ENCODE measurements at regions of chr16 and their contacts with region 1.

Region 1: DNA sequence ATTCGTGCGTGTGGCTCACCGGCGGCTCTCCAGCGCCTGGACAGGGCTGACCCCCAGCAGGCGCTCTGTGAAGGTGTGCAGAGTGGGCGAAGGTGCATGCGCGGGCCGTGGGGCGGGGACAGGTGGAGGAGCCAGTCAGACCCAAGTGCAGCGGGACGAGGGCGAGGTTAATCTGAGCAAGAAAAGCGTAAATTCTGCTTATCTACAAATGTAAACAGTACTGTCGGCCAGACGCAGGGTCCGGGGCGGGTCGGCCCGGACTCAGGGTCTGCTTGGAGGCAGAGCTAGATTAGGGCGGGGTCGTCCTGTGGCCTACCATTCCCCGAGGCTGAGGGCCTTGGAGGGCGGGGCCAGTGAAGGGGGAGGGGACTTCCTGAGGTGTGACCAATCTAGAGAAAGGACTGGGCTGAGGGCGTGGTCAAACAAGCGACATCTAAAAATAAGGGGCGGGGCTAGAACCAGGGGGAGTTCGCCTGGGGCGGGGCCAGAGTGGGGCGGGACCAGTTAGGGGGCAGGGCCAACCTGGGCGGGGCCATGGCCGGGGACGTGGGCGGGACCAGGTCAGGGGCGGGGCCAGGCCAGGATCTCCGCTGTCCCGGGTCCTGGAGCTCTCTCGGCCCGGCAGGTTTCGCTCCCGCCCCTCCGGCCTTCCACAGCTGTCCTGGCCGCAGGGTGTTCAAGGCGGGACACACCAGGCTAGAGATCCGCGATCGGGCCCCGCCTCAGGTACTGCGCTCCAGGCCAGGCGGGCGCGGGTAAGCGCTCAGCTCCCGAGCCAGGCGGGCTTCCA is at the start of gene SEC14L5:
- DNase-seq: peak; percentile 99
- H3K4me3 ChIP-seq: peak within 1 kb of the TSS; percentile 28 to 44
- H3K27ac ChIP-seq: peak within 1 kb of the TSS; percentile 71 to 74
- H3K4me1 ChIP-seq: peaks cover 2% of the 10 kb centered on the region
- H3K27me3 ChIP-seq: no peaks in the 10 kb centered on the region
- CTCF ChIP-seq: peak in 1 of 4 experiments; percentile 21
- POLR2A ChIP-seq: peak; percentile 58
- total RNA-seq, gene SEC14L5: 0.74 to 0.77 TPM

Region 2: DNA sequence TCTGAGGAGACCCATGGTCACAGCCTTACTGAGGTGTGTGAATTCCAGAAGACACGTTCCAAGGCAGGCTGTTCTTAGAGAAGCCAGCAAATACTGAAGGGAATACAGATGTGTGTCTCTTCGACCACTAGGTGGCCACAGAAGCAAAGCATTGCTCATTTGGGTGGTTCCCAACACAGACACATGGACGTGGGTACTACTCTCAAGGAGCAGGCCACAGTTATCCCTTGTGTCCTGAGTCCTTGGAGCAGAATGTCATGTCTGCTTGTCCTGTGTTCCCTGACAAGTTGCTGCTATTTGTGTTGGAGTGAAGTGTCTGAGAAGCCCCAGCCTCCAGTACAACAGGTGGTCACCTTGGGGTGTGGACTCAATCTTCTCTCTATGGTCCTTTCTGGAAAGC is 451.5 kb before region 1 on chr16:
- intact Hi-C with region 1: loop called (anchors 10 kb)
- DNase-seq: peak; percentile 71
- H3K4me3 ChIP-seq: no peak overlapping the region
- H3K27ac ChIP-seq: no peak overlapping the region
- H3K4me1 ChIP-seq: peaks cover 2% of the 10 kb centered on the region
- H3K27me3 ChIP-seq: no peaks in the 10 kb centered on the region
- CTCF ChIP-seq: peak; percentile 53 to 88 (median 82)
- POLR2A ChIP-seq: no peak

Region 3: DNA sequence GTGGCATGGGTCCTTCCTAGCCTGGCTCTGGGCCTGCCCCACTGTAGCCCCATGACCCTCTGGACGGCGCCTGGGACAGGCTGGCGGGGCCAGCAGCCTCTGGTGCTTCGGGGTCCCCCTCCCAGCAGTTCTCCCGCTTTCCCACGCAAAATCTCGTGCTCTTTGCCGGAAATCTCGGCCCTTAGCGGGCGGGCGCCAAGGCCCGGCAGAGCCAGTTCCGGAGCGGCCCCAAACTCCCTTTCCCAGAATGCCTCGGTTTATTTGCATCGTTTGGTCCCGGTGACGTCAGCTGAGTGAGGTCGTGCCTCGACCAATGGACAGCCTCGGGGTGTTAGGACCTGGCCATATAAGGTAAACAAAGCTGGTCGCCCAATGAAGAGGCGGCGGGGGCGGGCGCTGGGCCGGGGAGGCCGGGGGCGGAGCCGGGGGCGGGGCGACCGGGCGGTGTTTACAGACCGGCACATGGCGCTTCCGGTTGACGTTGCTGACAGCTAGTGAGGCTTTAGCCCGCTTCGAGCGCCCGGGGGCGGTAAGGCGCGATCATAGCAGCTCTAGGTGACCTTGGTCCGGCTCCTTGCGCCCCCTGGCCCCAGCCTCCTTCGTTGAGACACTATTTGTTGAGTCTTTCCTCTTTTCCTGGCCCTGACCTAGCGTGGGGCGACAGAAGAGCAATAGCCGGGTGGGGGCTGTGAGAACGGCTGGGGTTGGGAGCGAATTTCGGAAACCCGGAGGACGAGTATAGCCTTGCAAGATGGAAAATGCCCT is 341.7 kb before region 1 on chr16:
- intact Hi-C with region 1: loop called (anchors 5 kb)
- DNase-seq: peak; percentile 100
- H3K4me3 ChIP-seq: peak overlapping the region; percentile 56 to 59
- H3K27ac ChIP-seq: peak overlapping the region; percentile 100
- H3K4me1 ChIP-seq: peaks cover 24% of the 10 kb centered on the region
- H3K27me3 ChIP-seq: no peaks in the 10 kb centered on the region
- CTCF ChIP-seq: peak in 3 of 4 experiments; percentile 32 to 44 (median 41)
- POLR2A ChIP-seq: peak; percentile 87

Region 4: DNA sequence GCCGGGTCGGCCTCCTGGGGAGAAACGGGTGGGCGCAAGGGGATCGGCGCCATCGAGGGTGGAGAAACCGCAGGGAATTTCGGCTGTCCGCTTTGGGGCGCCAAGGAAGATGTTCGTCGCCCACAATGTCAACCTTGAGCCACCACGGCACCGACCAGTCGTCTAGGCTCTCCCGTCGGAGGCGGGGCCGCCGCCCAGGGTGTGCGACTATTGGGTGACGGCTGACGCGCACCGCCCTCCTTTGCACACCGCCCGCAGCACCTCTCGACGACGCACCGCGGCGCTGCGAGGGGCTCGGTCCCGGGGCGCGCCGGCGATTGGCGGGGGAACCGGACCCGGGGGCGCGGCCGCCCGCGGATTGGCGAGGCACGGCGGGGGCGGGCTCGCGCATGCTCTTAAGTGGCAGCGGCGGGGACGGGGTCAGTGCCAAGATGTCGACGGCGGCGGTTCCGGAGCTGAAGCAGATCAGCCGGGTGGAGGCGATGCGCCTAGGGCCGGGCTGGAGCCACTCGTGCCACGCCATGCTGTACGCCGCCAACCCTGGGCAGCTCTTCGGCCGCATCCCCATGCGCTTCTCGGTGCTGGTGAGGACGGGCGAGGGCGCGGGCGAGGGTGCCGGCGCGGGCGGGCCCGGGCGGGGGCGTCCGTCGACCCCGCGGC is 264.5 kb before region 1 on chr16 and contains the start of gene NUDT16L1:
- intact Hi-C with region 1: loop called (anchors 5 kb)
- DNase-seq: peak; percentile 96
- H3K4me3 ChIP-seq: peak within 1 kb of the TSS; percentile 90 to 99
- H3K27ac ChIP-seq: peak within 1 kb of the TSS; percentile 82 to 89
- H3K4me1 ChIP-seq: peaks cover 13% of the 10 kb centered on the region
- H3K27me3 ChIP-seq: no peaks in the 10 kb centered on the region
- CTCF ChIP-seq: peak in 2 of 4 experiments; percentile 73 to 74
- POLR2A ChIP-seq: peak; percentile 67
- total RNA-seq, gene NUDT16L1: 57.4 to 75.3 TPM

Region 5: DNA sequence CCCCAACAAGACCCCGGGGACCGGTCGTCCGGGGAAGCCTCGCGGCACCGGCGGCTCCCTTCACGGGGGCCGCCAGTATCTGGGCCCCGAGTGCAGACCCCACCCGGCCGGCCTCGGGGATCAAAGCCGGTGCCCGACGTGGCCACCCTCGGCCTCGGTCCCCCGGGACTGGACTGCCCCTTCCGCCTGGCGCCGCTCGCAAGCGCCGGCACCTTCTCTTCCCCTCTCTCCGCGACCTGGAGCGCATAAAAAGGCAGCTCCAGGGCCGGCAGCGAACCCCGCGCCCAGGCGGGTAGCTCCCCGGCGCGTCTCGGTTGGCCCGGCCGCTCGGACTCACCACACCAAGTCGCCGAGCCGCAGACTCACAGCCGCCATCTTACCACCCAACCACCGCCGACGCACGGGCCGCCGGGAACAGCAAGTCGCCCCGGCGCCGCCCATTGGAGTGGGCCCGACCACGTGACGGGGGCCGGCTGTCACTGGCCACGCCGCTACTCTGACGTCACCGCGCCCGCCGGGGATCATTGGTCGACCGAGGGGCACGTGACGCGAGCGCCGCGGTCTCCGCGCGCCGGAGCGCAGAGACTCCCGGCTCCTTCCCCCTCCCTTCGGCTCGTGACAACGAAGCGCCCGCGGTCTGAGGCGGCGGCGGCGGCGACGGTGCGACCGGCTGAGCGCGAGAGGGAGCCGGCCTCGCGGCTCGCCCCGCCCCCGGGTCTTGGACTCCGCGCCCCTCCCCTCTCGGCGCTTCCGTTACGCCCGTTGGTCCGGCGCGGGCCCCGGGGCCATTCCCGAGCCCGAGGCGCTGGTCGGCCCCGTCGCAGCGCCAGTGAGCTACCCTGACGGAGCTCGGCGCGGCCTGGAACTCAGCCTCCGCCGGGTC is 110.8 kb before region 1 on chr16 and contains the starts of genes GLYR1 and UBN1:
- intact Hi-C with region 1: loop called (anchors 5 kb)
- DNase-seq: peak; percentile 99
- H3K4me3 ChIP-seq: peak within 1 kb of the TSS; percentile 94 to 98
- H3K27ac ChIP-seq: peak within 1 kb of the TSS; percentile 91 to 96
- H3K4me1 ChIP-seq: peaks cover 13% of the 10 kb centered on the region
- H3K27me3 ChIP-seq: no peaks in the 10 kb centered on the region
- CTCF ChIP-seq: peak in 1 of 4 experiments; percentile 15
- POLR2A ChIP-seq: peak; percentile 77
- total RNA-seq, gene GLYR1: 57.4 to 60.8 TPM
- total RNA-seq, gene UBN1: 28.2 to 56.9 TPM